ENCODE measurements at regions of chr20 and their contacts with region 1.

Region 1: GRCh38 chr20:9294053-9294452 is 220.3 kb upstream of the LAMP5 start:
- DNase-seq: no peak
- H3K4me3 ChIP-seq: no peak overlapping the region
- H3K27ac ChIP-seq: no peak overlapping the region
- H3K4me1 ChIP-seq: no peaks in the 10 kb centered on the region
- H3K27me3 ChIP-seq: no peaks in the 10 kb centered on the region
- CTCF ChIP-seq: no peak
- POLR2A ChIP-seq: no peak

Region 2: GRCh38 chr20:9235518-9235917 is 58.5 kb before region 1 on chr20:
- intact Hi-C with region 1: loop called (anchors 10 kb)
- DNase-seq: no peak
- H3K4me3 ChIP-seq: no peak overlapping the region
- H3K27ac ChIP-seq: no peak overlapping the region
- H3K4me1 ChIP-seq: no peaks in the 10 kb centered on the region
- H3K27me3 ChIP-seq: no peaks in the 10 kb centered on the region
- CTCF ChIP-seq: no peak
- POLR2A ChIP-seq: no peak

Region 3: DNA sequence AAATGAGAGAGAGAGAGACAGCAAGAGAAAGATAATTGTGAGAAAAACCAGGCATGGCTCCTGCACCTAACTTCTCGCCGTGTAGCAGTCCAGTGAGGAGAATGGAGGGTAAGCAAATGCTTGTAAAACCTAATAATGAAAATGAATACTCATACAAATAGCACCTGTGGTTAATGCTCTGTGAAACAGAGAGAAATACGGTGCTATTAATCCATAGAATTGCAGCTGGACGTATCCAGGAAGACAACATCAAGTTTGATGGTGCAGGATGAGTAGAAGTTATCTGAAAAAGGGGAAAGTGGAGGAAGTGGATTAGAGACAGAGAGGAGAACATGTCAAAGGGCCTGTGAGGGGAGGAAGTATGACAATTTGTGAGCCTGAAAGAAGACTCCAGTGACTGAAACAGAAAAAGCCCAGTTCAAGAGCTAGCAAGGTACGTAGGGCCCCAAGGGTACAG is 634.3 kb after region 1 on chr20:
- intact Hi-C with region 1: no loop called
- DNase-seq: no peak
- H3K4me3 ChIP-seq: no peak overlapping the region
- H3K27ac ChIP-seq: no peak overlapping the region
- H3K4me1 ChIP-seq: no peaks in the 10 kb centered on the region
- H3K27me3 ChIP-seq: no peaks in the 10 kb centered on the region
- CTCF ChIP-seq: no peak
- POLR2A ChIP-seq: no peak

Measured in uterus (tissue), 4 donors.